ENCODE measurements at regions of chr6 and their contacts with region 1.

Region 1: GRCh38 chr6:110873981-110874879 is at the start of gene AMD1:
- DNase-seq: peak; percentile 95 to 99
- H3K4me3 ChIP-seq: peak within 1 kb of the TSS; percentile 81 to 95
- H3K27ac ChIP-seq: peak within 1 kb of the TSS; percentile 95 to 96
- H3K4me1 ChIP-seq: peaks cover 0 to 21% of the 10 kb centered on the region in 2 donors
- H3K27me3 ChIP-seq: no peaks in the 10 kb centered on the region
- CTCF ChIP-seq: no peak
- total RNA-seq, gene AMD1: 19.1 TPM

Region 2: DNA sequence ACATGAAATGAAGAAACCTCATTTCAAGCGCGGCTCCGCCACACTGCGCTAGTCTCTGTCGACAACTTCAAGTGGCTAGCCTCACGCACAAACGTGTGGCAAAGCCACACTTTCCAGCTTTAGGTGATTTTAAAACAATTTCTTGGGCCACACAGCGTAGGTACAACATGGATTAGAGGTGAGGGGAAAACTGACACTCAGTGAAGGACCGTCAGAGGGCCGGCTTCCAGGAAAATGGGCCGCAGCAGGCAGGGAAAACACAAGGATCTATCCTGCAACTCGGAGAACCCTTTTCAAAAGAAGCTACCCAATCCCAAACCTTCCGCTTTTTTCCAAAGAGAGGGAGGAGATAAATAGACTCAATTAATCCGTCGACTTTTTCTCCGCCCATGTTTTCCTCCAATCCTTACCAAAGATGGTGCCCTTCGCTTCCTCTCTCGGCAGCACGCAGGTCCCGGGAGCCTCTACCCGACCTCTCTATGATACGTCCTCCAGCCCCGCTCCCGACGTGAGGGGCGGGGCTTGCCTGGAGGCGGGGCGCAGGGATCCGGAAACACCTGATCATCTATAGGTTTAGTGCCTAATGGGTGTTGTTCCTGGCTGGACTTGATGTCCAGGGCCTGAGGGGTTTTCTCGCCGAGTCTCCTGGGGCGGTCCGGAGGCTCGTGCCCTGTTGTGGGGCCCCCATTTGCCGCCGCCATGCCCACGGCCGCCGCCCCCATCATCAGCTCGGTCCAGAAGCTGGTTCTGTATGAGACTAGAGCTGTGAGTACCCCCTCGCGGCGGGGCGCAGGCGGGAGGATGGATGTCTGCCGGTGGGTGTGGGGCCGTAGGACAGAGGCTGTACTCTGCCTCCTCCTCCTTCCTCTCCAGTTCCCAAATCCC is 1183.3 kb before region 1 on chr6 and contains the starts of genes AK9 and FIG4:
- intact Hi-C with region 1: loop called (anchors 10 kb)
- DNase-seq: peak; percentile 86 to 96
- H3K4me3 ChIP-seq: peak within 1 kb of the TSS; percentile 65 to 74
- H3K27ac ChIP-seq: peak within 1 kb of the TSS; percentile 83 to 90
- H3K4me1 ChIP-seq: no peaks in the 10 kb centered on the region
- H3K27me3 ChIP-seq: no peaks in the 10 kb centered on the region
- CTCF ChIP-seq: peak in 2 of 3 experiments; percentile 3 to 38
- total RNA-seq, gene AK9: 0.75 TPM
- total RNA-seq, gene FIG4: 27.9 TPM

Region 3: DNA sequence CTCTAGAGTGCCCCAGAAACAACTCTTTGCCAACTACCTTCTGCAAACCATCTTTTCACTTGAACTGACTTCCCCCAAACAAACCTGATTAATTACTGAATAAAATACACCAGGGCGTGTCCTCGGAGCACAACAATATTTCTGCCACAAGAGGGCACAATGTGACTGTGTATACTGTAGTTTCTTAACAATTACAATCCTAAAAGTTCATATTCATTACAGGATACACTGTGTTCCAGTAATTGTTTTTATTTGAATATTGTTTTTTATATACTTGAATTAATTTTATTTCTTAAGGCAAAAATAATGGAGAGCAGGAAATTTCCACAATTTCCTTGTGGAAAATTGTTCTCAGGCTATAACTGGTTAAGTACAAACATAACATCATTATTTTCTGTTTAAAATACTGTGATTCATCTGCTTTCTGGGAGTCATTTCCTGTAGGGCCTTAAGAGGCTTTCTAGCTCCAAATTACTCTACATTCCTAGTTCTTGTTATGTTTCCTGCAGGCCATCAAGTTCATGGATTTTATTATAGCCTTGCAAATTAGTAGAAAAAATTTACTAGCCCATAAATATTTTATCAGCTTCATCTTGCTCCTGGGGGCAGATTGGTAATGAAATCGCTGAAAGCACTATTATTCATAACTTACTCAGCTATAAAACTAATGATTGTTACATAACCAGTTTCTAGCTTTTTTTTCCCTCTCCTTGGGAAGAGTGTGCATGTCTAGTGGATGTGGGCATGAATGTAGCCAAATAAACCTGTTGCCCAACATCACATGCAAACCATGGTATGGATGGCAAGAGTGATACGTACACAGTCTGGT is 345.9 kb before region 1 on chr6:
- intact Hi-C with region 1: loop called (anchors 5 kb)
- DNase-seq: peak in 1 of 2 donors; percentile 72
- H3K4me3 ChIP-seq: no peak overlapping the region
- H3K27ac ChIP-seq: peak overlapping the region in 1 of 2 donors; percentile 33
- H3K4me1 ChIP-seq: peaks cover 0 to 3% of the 10 kb centered on the region in 2 donors
- H3K27me3 ChIP-seq: no peaks in the 10 kb centered on the region
- CTCF ChIP-seq: peak; percentile 37 to 69 (median 64)

Region 4: GRCh38 chr6:110815217-110816109 is 58.8 kb before region 1 on chr6 and contains the start of gene CDK19:
- intact Hi-C with region 1: loop called (anchors 1 kb)
- DNase-seq: peak; percentile 96 to 99
- H3K4me3 ChIP-seq: peak within 1 kb of the TSS; percentile 97
- H3K27ac ChIP-seq: peak within 1 kb of the TSS; percentile 93 to 98
- H3K4me1 ChIP-seq: peaks cover 3 to 6% of the 10 kb centered on the region in 2 donors
- H3K27me3 ChIP-seq: no peaks in the 10 kb centered on the region
- CTCF ChIP-seq: no peak
- total RNA-seq, gene CDK19: 5.2 TPM

Region 5: GRCh38 chr6:110981202-110981600 is 107.0 kb after region 1 on chr6:
- intact Hi-C with region 1: loop called (anchors 5 kb)
- DNase-seq: no peak
- H3K4me3 ChIP-seq: peak overlapping the region; percentile 70 to 73
- H3K27ac ChIP-seq: peak overlapping the region; percentile 78 to 86
- H3K4me1 ChIP-seq: peaks cover 0 to 5% of the 10 kb centered on the region in 2 donors
- H3K27me3 ChIP-seq: no peaks in the 10 kb centered on the region
- CTCF ChIP-seq: no peak

Measured in ascending aorta (tissue), 2 donors.